PC-3 (cell line): ENCODE measurements at regions of chr5 and their contacts with region 1.

Region 1: GRCh38 chr5:149765932-149766331 is 35.8 kb downstream of the PPARGC1B start:
- DNase-seq: peak; percentile 67
- ATAC-seq: no peak
- H3K4me3 ChIP-seq: no peak overlapping the region
- H3K27ac ChIP-seq: no peak overlapping the region
- H3K4me1 ChIP-seq: no peaks in the 10 kb centered on the region
- H3K27me3 ChIP-seq: no peaks in the 10 kb centered on the region
- CTCF ChIP-seq: peak; percentile 89

Region 2: DNA sequence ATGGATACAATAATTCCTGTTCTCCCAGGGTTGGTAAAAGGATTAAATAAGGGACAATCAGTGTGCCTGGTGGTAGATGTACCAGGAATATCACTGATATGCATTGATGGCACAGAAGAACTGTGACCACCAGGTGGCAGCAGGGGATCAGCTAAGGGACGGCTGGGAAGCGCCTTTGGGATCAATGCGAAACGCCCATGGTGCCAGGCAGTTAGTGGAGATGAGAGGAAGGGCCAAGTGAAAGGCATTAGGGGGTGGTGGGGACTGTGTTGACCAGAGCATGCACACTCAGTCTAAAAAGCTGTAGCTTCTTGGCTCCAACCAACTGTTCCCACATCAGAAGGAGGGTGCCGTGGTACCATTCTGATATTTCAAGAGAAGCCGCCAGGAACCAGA is 129.1 kb before region 1 on chr5:
- CTCF ChIA-PET with region 1: interaction called, 3 read pairs
- POLR2A ChIA-PET with region 1: no interaction called
- intact Hi-C with region 1: loop called (anchors 1 kb)
- DNase-seq: peak; percentile 98
- ATAC-seq: peak; percentile 85
- H3K4me3 ChIP-seq: no peak overlapping the region
- H3K27ac ChIP-seq: no peak overlapping the region
- H3K4me1 ChIP-seq: peaks cover 26% of the 10 kb centered on the region
- H3K27me3 ChIP-seq: no peaks in the 10 kb centered on the region
- CTCF ChIP-seq: peak; percentile 100

Region 3: GRCh38 chr5:149860801-149861322 is 94.9 kb after region 1 on chr5:
- CTCF ChIA-PET with region 1: interaction called, 26 read pairs
- POLR2A ChIA-PET with region 1: no interaction called
- intact Hi-C with region 1: no loop called
- DNase-seq: peak; percentile 60
- ATAC-seq: peak; percentile 95
- H3K4me3 ChIP-seq: no peak overlapping the region
- H3K27ac ChIP-seq: no peak overlapping the region
- H3K4me1 ChIP-seq: peaks cover 16% of the 10 kb centered on the region; the same call in 1 of the 2 replicates
- H3K27me3 ChIP-seq: no peaks in the 10 kb centered on the region
- CTCF ChIP-seq: no peak